ENCODE measurements at regions of chr2 and their contacts with region 1.

Region 1: GRCh38 chr2:185738679-185739472 is at the start of gene FSIP2:
- DNase-seq: peak; percentile 97
- ATAC-seq: peak; percentile 89
- H3K4me3 Mint-ChIP-seq: peak within 1 kb of the TSS; percentile 75
- H3K27ac Mint-ChIP-seq: no peak within 1 kb of the TSS
- H3K4me1 Mint-ChIP-seq: peaks cover 40% of the 10 kb centered on the region
- H3K27me3 Mint-ChIP-seq: peaks cover 4% of the 10 kb centered on the region; the same call in 1 of the 2 replicates
- CTCF ChIP-seq: peak; percentile 96
- total RNA-seq, gene FSIP2: 1.9 to 2.2 TPM (median 1.9 TPM) in 3 replicates

Region 2: DNA sequence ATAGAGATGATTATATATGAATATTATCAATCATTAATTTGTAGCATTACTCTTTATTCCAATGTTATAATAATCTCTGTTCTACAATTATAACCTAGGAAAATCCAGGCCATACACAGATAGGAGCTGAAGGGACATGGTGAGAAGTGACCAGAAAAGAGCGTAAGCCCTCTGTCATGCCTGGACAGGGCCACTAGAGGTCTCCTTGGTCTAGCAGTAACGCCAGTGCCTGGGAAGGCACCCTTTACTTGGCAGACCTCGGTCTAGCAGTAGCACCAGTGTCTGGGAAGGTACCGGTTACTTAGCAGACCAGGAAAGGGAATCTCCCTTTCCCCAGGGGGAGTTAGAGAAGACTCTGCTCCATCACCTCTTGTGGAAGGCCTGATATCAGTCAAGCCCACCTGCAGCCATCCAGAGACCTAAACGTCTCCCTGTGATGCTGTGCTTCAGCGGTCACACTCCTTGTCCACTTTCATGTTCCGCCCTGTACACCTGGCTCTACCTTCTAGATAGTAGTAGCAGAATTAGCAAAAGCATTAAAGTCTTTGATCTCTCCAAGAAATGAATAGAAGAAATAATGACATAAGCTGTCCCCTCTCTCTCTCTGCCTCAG is 447.7 kb before region 1 on chr2:
- CTCF ChIA-PET with region 1: interaction called, 73 read pairs
- POLR2A ChIA-PET with region 1: no interaction called
- DNase-seq: peak; percentile 81
- ATAC-seq: peak; percentile 98
- H3K4me3 Mint-ChIP-seq: no peak overlapping the region
- H3K27ac Mint-ChIP-seq: no peak overlapping the region
- H3K4me1 Mint-ChIP-seq: peaks cover 14% of the 10 kb centered on the region
- H3K27me3 Mint-ChIP-seq: no peaks in the 10 kb centered on the region
- CTCF ChIP-seq: peak; percentile 63

Region 3: DNA sequence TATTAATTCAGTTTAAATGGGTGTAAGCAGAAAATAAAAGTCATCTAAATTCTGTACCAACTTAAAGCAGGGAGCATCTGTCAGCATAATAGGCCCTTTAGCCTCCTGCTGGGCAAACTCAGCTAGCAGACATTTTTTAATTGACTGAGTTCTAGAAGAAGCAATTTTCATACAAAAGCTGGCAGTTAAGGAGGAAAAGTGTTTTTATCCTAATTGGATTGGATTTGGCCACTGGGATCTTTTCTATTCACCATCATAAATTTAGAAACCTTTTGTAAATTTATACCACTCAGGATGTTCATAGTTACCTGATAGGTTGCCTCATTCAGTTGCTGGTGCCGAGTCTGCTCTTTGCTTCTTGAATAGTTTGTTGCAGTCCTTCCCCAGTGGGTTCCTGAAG is 263.0 kb before region 1 on chr2:
- CTCF ChIA-PET with region 1: interaction called, 12 read pairs
- POLR2A ChIA-PET with region 1: no interaction called
- DNase-seq: no peak
- ATAC-seq: peak; percentile 22; the same call in 1 of the 2 replicates
- H3K4me3 Mint-ChIP-seq: no peak overlapping the region; the same call in 1 of the 2 replicates
- H3K27ac Mint-ChIP-seq: peak overlapping the region; percentile 45; the same call in 1 of the 2 replicates
- H3K4me1 Mint-ChIP-seq: peaks cover 50% of the 10 kb centered on the region
- H3K27me3 Mint-ChIP-seq: no peaks in the 10 kb centered on the region
- CTCF ChIP-seq: no peak

Region 4: GRCh38 chr2:185537689-185538088 is 201.2 kb before region 1 on chr2:
- CTCF ChIA-PET with region 1: interaction called, 13 read pairs
- POLR2A ChIA-PET with region 1: no interaction called
- DNase-seq: no peak
- ATAC-seq: no peak
- H3K4me3 Mint-ChIP-seq: no peak overlapping the region
- H3K27ac Mint-ChIP-seq: no peak overlapping the region
- H3K4me1 Mint-ChIP-seq: peaks cover 32% of the 10 kb centered on the region
- H3K27me3 Mint-ChIP-seq: no peaks in the 10 kb centered on the region
- CTCF ChIP-seq: no peak

Region 5: GRCh38 chr2:185628985-185629384 is 109.9 kb before region 1 on chr2:
- CTCF ChIA-PET with region 1: interaction called, 70 read pairs
- POLR2A ChIA-PET with region 1: no interaction called
- DNase-seq: peak; percentile 84
- ATAC-seq: peak; percentile 98
- H3K4me3 Mint-ChIP-seq: no peak overlapping the region
- H3K27ac Mint-ChIP-seq: no peak overlapping the region
- H3K4me1 Mint-ChIP-seq: peaks cover 5% of the 10 kb centered on the region
- H3K27me3 Mint-ChIP-seq: no peaks in the 10 kb centered on the region
- CTCF ChIP-seq: peak; percentile 78

Region 6: GRCh38 chr2:185998562-185999070 is 259.7 kb after region 1 on chr2:
- CTCF ChIA-PET with region 1: no interaction called
- POLR2A ChIA-PET with region 1: no interaction called
- DNase-seq: no peak
- ATAC-seq: no peak
- H3K4me3 Mint-ChIP-seq: no peak overlapping the region
- H3K27ac Mint-ChIP-seq: no peak overlapping the region
- H3K4me1 Mint-ChIP-seq: peaks cover 2% of the 10 kb centered on the region
- H3K27me3 Mint-ChIP-seq: no peaks in the 10 kb centered on the region
- CTCF ChIP-seq: no peak

Measured in WTC11 (cell line).